ENCODE measurements at regions of chr9 and their contacts with region 1.

Region 1: DNA sequence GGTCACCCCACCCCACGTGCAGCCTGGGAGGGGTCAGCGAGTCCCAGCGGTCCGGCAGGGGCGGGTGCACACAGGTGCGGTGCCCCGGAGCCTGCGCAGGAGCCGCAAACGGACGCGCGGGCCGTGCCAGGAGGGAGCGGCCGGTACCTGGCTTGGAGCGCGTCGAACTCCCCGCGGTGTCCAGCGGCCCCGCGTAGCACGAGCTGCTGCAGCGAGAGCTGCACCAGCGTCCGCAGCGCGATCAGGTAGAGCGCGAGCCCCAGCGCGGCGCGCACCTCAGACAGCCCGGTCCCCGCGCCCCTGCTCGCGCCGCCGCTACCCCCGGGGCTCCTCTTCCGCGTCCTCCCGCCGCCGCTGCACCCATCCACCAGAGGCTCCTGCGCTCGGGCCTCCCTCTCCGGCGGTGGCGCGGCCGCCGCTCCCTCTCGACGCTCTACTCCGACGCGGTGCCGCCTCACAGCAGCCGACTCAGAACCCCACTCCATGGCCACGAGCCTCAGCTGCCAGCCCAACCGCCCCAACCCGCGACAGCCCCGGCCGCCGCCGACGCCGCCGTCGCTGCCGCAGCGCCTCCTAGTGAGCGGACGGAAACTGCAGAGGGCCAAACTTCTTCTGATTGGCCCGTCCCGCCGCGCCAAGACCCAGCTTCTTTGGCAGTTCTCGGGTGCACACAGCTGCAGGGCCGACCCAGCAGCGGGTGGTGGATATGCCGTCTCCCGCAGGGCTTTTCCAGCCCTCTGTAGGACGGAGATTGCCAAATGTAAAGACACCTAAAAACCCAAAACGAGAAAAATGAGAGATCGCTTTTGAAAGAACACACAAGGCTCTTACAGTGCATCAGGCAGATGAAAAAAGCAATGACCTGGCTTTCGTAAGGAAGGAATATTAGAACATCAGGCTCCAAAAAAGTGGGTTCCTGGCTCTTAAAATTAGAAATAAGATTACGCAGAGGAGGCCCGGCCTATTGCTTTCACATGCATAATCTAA is at the start of gene ERMP1:
- DNase-seq: no peak
- H3K4me3 ChIP-seq: peak within 1 kb of the TSS; percentile 79
- H3K27me3 ChIP-seq: no peaks in the 10 kb centered on the region
- CTCF ChIP-seq: peak; percentile 71
- polyA plus RNA-seq, gene ERMP1: 2.3 and 4.8 TPM in 2 replicates

Region 2: DNA sequence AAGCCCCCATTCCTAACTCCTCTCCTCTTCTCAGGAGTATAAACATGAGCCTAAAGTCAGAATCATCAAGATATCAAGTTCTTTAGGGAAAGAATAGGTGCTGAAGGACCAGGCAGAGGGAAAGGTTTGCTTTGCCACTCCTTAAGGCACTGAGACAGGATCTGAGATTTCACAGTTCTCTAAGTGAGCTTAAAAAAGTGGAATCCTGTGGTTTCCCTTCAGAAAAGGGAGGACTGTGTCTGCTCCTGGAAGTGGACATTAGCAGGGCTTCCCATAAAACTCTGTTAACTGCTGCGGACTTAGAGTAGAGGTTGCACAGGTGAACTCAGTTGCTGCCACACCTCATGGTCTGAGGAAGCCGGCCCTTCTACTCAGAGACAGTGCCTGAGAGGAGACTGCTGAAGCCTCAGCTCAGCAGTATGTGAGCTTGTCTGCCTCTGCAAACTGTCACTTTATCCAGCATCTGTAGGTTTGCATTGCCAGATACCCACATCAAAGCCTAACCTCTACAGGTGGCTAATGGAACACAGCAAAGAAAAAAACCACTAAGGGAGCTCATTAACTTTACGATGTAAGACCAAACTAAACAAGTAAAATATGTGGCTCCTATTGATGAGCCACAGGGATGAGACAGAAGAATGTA is 161.0 kb before region 1 on chr9:
- CTCF ChIA-PET with region 1: no interaction called
- POLR2A ChIA-PET with region 1: no interaction called
- DNase-seq: no peak
- H3K4me3 ChIP-seq: no peak overlapping the region
- H3K27me3 ChIP-seq: no peaks in the 10 kb centered on the region
- CTCF ChIP-seq: no peak

Region 3: DNA sequence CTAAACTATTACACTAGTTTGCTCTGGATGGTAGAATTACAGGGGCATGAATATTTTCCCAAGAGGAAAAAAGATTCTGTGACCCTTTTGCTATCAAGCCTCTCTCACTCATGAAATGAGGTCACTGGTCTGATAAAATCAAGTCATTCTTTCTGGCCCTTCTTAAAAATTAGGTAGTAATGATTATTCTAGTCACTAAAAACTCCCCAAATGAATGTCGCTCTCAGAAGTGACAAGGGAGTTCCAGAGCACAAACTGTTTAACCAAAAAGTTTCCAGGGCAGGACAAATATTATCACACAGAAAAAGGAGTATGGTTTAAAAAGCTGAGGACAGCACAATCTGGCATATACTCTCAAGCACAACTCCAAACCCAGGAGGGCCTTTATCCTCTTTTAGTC is 12.4 kb before region 1 on chr9:
- CTCF ChIA-PET with region 1: interaction called, 23 read pairs
- POLR2A ChIA-PET with region 1: no interaction called
- DNase-seq: no peak
- H3K4me3 ChIP-seq: no peak overlapping the region
- H3K27me3 ChIP-seq: no peaks in the 10 kb centered on the region
- CTCF ChIP-seq: no peak

Region 4: DNA sequence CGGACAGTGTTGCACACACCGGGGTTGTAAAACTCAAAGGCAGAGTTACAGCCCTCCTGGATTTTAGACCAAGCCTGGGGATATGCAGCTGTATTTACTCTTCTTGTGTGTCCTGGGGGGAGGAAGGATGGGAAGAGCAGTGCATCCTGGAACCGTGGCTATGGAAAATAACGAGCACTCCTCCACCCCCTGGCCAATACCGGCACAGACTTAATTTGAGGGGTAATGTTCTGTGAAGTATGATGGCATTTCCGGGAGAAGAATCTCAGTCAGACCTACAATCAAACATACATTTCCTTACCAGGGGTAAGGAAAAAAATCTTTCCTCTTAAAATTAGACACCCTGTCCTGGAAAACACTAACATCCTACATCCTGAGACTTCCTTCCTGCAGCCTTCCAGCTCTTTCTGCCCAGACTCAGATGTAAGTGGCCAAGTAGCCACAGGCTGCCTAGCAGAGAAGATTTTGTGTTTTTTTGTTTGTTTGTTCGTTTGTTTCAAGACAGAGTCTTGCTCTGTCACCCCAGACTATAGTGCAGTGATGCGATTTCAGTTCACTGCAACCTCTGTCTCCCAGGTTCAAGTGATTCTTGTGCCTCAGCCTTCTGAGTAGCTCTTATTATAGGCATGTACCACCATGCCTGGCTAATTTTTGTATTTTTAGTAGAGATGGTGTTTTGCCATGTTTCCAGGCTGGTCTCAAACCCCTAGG is 11.1 kb after region 1 on chr9:
- CTCF ChIA-PET with region 1: interaction called, 27 read pairs
- POLR2A ChIA-PET with region 1: no interaction called
- DNase-seq: no peak
- H3K4me3 ChIP-seq: no peak overlapping the region
- H3K27me3 ChIP-seq: peaks cover 4% of the 10 kb centered on the region; the same call in 1 of the 2 replicates
- CTCF ChIP-seq: 0 out of 2 replicates have a peak, but pooled peaks have one; percentile 4